Left cardiac atrium (tissue), 4 donors: ENCODE measurements at regions of chr10 and their contacts with region 1.

Region 1: GRCh38 chr10:73650537-73651331 is 5.1 kb downstream of the SYNPO2L start:
- DNase-seq: peak; percentile 61
- ATAC-seq: peak; percentile 42 to 46

Region 2: DNA sequence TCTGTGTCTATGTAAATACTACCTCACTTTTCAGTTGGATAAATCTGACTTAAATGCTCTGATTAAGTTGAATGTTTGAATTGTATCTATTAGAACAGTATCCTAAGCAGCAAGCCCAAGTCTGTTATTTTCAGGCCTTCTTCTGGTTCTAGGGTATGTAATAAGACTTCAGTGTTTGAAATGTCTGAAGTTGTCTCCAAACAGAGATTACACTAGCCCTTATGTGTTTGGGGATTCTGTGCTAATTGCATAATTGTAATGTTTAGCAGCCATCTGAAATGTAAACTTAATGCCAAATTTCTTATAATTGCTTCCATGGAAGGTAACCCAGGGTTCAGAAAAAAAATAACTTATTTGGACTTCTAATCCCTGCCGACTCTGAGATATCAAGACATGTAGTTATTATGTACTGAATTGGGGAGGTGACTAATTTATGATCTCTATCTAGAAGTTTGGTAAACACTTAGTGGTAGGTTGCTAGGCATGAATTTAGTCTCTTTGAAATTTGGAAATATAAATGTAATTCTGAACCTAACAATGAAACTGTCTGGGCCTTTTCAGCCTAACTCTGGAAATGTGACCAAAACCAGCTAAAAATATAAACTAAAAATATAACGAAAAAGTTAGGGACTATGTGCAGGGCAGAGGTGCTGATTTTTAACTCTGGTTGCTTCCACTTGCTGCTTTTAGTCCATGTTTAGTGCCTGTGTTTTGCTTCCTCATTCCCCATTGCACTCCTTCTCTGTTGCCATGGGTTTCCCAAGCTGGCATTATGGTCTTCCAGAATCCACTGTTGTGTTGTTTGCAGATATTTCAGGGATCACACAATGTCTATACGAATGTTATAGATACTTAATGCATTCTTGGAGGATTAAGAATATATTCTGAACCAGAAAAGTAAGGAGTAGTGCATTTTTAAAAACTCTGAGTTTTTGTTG is 904.0 kb before region 1 on chr10:
- intact Hi-C with region 1: no loop called
- DNase-seq: no peak
- ATAC-seq: peak in 1 of 2 donors; percentile 26

Region 3: DNA sequence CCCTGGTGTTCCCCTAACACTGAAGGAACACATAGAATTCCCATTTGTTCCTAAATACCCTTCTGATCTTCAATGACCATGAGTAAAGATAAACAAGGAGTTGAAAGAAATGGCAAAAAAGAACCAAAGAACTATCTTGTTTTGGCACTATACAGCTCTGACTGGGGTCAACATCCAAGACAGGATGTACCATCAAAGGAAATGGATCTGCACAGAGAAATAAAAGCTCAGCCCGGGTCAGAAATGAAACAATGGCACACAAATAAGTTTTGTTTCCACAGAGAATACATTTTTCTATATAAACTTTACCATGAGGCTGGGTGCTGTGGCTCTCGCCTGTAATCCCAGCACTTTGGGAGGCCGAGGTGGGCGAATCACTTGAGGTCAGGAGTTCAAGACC is 41.6 kb before region 1 on chr10:
- intact Hi-C with region 1: no loop called
- DNase-seq: no peak
- ATAC-seq: no peak

Region 4: GRCh38 chr10:73743905-73744663 is 93.3 kb after region 1 on chr10 and contains the start of gene SEC24C:
- intact Hi-C with region 1: loop called in 1 of 2 experiments (anchors 10 kb)
- DNase-seq: peak; percentile 97
- ATAC-seq: peak; percentile 95 to 98
- total RNA-seq, gene SEC24C: 42.9 to 52.6 TPM